ENCODE measurements at regions of chr11 and their contacts with region 1.

Region 1: DNA sequence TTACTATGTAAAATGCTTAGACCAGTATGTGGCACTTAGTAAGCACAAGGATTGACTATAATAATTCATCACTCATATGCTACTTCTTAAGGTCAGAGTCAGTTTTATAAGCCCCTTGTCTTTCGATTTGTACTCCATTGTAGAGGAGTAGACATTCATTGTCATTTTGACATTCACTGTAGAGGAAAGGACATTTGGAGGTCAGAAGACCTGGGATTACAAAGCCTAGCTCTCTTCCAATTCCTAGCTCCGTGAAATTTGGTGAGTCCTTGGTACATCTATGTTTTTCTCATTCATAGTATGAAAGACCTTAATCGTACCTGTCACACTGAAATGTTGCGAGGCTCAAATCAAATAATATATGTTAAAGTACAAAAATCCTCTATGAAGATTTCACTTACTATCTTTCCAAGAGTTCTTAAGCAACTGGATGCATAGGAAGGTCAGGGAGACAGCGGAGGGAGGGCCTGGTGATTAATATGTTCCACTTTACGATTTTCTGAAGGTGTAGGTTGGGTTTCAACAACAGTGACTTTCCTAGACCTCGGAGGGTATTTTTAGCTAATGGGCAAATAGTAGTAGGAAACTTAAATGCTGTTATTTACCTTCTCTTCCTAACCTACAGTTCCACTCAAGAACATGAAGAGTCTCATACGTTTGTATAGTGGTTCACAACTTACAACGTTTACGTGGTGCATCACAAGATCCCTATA is 1.4 kb upstream of the EMSY start:
- DNase-seq: no peak
- H3K4me3 ChIP-seq: peak overlapping the region; percentile 94 to 98
- H3K27ac ChIP-seq: peak overlapping the region; percentile 94
- H3K4me1 ChIP-seq: peaks cover 0 to 5% of the 10 kb centered on the region in 2 donors
- H3K27me3 ChIP-seq: no peaks in the 10 kb centered on the region
- CTCF ChIP-seq: no peak
- POLR2A ChIP-seq: no peak

Region 2: DNA sequence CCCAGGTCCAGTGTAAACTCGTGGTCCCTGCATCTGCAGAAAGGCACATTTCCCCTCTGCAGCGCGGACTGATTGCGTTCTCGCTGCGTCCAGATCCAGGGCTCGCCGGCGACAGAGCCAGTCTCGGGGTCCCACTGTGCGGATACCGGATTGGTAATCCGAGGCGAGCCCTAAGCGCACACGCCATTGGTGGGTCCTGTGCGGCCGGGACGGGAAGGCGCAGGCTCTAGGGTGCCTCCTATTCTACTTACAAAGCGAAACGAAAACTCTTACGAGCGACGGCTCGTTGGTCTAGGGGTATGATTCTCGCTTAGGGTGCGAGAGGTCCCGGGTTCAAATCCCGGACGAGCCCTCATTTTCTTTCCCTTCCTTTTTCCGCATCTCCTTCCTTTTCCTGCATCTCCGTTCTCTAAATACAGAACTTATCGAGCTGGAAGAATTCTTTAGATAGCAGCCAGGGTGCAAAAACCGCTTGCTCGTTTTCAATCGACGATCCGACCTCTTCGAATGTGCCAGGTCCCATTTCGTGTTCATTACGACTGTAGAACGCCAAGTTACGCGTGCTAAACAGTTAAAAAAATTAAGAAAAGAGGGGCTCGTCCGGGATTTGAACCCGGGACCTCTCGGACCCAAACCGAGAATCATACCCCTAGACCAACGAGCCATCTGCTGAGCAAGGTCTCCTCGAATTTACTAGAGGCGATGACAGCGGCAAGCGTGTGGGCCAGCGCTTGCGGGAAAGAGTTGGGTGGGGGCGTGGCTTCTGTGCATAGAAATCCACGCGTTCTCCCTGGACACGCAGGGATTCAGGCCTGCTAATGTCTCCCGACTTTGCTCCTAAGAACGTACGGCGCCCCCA is 208.0 kb before region 1 on chr11:
- intact Hi-C with region 1: no loop called
- DNase-seq: peak; percentile 93
- H3K4me3 ChIP-seq: peak overlapping the region; percentile 56 to 98
- H3K27ac ChIP-seq: peak overlapping the region; percentile 94
- H3K4me1 ChIP-seq: peaks cover 0 to 6% of the 10 kb centered on the region in 2 donors
- H3K27me3 ChIP-seq: no peaks in the 10 kb centered on the region
- CTCF ChIP-seq: no peak
- POLR2A ChIP-seq: peak in 1 of 2 donors; percentile 55

Region 3: DNA sequence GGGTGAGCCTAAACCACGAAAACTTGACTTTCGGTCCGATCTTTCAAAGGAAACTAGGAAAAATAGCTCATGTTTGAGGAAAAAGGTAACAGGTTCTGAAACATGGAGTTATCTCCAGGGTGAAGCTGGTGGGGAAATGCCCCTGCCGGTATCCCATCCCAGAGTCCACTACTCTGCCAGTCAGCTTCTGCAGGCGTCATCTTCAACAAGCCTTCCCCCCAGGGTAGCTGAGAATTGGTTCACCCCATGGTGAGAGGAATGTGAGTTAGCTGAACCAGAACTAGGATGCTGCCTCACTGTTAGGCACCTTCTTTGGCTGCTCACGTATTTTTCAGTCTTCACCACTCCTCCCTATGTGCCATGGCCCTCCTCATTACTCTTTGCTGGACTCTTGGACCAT is 61.2 kb before region 1 on chr11:
- intact Hi-C with region 1: loop called (anchors 2 kb)
- DNase-seq: no peak
- H3K4me3 ChIP-seq: peak overlapping the region in 1 of 2 donors; percentile 96
- H3K27ac ChIP-seq: no peak overlapping the region
- H3K4me1 ChIP-seq: peaks cover 5 to 8% of the 10 kb centered on the region in 2 donors
- H3K27me3 ChIP-seq: no peaks in the 10 kb centered on the region
- CTCF ChIP-seq: no peak
- POLR2A ChIP-seq: no peak

Measured in uterus (tissue), 4 donors.